HEK293 (cell line): ENCODE measurements at regions of chr3 and their contacts with region 1.

Region 1: DNA sequence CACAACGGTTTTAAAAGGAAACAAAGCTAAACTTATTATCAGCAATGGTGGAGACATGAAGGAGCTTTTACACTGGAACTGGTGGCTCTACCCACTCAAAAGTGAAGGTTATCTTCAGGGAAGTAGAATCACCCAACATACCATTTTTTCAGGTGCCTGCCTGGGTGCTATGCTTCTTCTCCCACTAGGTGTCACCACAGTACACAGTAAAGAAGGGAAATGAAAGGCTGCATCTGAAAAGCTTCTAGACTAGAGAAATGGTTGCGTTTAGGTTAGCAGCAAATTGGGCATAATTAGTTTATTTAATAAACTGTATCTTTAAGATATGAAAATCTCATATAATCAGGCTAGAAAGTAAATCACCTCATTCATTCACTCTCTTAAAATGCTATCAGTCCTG is 47.0 kb upstream of the SELENOK start:
- H3K4me3 ChIP-seq: no peak overlapping the region
- H3K27ac ChIP-seq: no peak overlapping the region
- H3K4me1 ChIP-seq: no peaks in the 10 kb centered on the region
- CTCF ChIP-seq: no peak

Region 2: GRCh38 chr3:54104084-54104483 is 165.4 kb after region 1 on chr3:
- CTCF ChIA-PET with region 1: interaction called, 10 read pairs
- POLR2A ChIA-PET with region 1: no interaction called
- H3K4me3 ChIP-seq: no peak overlapping the region
- H3K27ac ChIP-seq: no peak overlapping the region
- H3K4me1 ChIP-seq: no peaks in the 10 kb centered on the region
- CTCF ChIP-seq: no peak

Region 3: GRCh38 chr3:54374214-54374855 is 435.7 kb after region 1 on chr3:
- CTCF ChIA-PET with region 1: interaction called, 15 read pairs
- POLR2A ChIA-PET with region 1: interaction called, 4 read pairs
- H3K4me3 ChIP-seq: no peak overlapping the region
- H3K27ac ChIP-seq: no peak overlapping the region
- H3K4me1 ChIP-seq: no peaks in the 10 kb centered on the region
- CTCF ChIP-seq: no peak

Region 4: DNA sequence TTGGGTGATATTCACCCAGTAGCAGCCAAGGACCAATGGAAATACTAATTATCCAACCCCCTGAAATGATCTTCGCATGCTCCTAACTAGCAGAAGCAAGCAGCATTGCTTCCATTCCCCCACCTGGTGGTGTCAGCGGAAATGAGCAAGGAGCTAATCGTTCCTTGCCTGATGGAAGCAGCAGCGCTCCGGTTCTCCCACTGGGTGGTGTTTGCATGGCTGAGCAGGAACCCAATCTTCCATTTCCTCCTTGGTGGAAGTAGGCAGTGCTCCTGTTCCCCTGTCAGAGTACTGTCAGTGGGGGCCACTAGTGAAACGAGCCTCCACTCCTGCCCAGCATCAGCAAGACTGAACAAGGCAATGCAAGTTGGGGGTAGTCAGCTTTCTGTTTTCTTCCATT is 495.2 kb after region 1 on chr3:
- CTCF ChIA-PET with region 1: interaction called, 12 read pairs
- POLR2A ChIA-PET with region 1: no interaction called
- H3K4me3 ChIP-seq: no peak overlapping the region
- H3K27ac ChIP-seq: no peak overlapping the region
- H3K4me1 ChIP-seq: no peaks in the 10 kb centered on the region
- CTCF ChIP-seq: peak; percentile 55